ENCODE measurements at regions of chr12 and their contacts with region 1.

Region 1: DNA sequence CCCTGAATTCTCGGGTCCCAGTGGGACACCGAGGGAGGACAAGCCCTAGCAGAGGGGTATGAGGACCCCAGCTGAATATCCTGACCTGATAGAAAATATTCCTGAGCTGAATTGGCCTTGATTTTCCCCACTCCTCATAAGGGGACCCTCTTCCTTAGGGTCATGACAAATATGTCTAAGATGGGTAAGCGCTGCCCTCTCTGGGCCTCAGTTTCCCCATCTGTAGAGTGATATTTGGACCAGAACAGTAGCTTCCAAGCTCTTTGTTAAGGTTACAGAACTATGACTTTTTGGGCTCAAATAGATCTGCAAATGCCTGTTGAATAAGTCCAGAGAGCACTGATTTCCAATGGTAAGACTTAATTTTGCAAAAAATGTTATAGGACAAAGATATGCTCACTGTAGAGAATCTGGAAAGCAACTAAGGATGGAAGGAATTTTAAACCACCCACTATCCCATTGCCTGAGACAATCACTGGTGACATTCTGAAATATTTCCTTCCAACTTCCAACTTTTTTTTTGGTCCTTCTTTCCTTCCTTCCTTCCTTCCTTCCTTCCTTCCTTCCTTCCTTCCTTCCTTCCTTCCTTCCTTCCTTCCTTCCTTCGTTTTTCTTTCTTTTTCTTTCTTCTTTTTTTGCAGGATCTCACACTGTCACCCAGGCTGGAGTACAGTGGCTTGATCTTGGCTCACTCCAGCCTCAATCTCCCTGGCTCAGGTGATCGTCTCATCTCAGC is 32.0 kb downstream of the MYL2 start:
- DNase-seq: no peak
- ATAC-seq: no peak
- H3K4me3 ChIP-seq: no peak overlapping the region
- H3K27ac ChIP-seq: no peak overlapping the region
- H3K4me1 ChIP-seq: no peaks in the 10 kb centered on the region
- H3K27me3 ChIP-seq: no peaks in the 10 kb centered on the region

Region 2: DNA sequence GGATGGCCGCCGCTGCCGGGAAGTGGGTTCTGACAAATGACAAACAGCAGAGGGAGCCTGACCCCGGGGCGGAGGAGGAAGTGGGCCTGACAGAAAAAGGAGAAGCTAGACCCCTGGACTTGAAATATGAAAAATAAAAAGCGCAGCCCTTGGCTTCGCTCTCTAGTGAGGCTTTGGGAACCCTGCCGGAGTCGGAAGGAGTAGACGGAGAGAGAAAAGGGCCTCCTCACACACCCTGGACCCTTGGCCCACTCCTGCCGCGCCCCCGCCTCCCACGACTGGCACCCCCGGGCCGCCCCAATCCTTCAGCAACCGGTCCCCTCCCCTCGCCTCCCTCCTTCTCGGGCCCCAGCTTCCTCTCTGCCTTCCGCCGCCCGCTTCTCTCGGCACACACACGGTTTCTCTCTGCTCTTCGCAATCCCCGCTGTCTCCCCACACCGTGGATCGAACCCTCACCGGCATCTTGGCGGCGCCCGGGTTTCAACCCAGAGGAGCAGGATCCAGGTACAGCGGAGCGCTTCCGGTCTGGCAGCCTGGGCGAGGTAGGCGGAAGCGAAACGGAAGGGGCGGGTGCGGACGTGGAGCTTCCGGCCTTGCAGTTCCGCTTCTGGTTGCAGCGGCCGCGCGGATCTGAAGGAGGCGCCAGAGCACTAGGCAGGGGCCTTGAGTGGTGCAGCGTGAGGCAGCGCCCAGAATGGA is 438.5 kb before region 1 on chr12 and contains the start of gene ARPC3:
- intact Hi-C with region 1: loop called (anchors 5 to 10 kb)
- DNase-seq: peak; percentile 97 to 98
- ATAC-seq: peak; percentile 100
- H3K4me3 ChIP-seq: peak within 1 kb of the TSS; percentile 45 to 95
- H3K27ac ChIP-seq: peak within 1 kb of the TSS; percentile 33 to 76
- H3K4me1 ChIP-seq: no peaks in the 10 kb centered on the region
- H3K27me3 ChIP-seq: no peaks in the 10 kb centered on the region
- total RNA-seq, gene ARPC3: 154 to 155 TPM

Region 3: GRCh38 chr12:110513842-110514241 is 374.6 kb before region 1 on chr12:
- intact Hi-C with region 1: loop called in 1 of 2 experiments (anchors 2 kb)
- DNase-seq: no peak
- ATAC-seq: no peak
- H3K4me3 ChIP-seq: no peak overlapping the region
- H3K27ac ChIP-seq: no peak overlapping the region
- H3K4me1 ChIP-seq: no peaks in the 10 kb centered on the region
- H3K27me3 ChIP-seq: no peaks in the 10 kb centered on the region

Region 4: GRCh38 chr12:110583137-110584059 is 305.0 kb before region 1 on chr12 and contains the start of gene PPTC7:
- intact Hi-C with region 1: no loop called
- DNase-seq: peak; percentile 98 to 99
- ATAC-seq: peak; percentile 99
- H3K4me3 ChIP-seq: peak within 1 kb of the TSS; percentile 69 to 93
- H3K27ac ChIP-seq: peak within 1 kb of the TSS; percentile 50
- H3K4me1 ChIP-seq: no peaks in the 10 kb centered on the region
- H3K27me3 ChIP-seq: no peaks in the 10 kb centered on the region
- total RNA-seq, gene PPTC7: 17.1 to 21.8 TPM

Region 5: GRCh38 chr12:110606253-110606611 is 282.2 kb before region 1 on chr12:
- intact Hi-C with region 1: loop called in 1 of 2 experiments (anchors 5 kb)
- DNase-seq: no peak
- ATAC-seq: no peak
- H3K4me3 ChIP-seq: no peak overlapping the region
- H3K27ac ChIP-seq: no peak overlapping the region
- H3K4me1 ChIP-seq: no peaks in the 10 kb centered on the region
- H3K27me3 ChIP-seq: no peaks in the 10 kb centered on the region

Region 6: GRCh38 chr12:110742718-110743570 is 145.5 kb before region 1 on chr12 and contains the start of gene PPP1CC:
- intact Hi-C with region 1: loop called (anchors 5 to 10 kb)
- DNase-seq: peak; percentile 97
- ATAC-seq: peak; percentile 98
- H3K4me3 ChIP-seq: peak within 1 kb of the TSS; percentile 83 to 89
- H3K27ac ChIP-seq: peak within 1 kb of the TSS in 1 of 2 donors; percentile 72
- H3K4me1 ChIP-seq: peaks cover 0 to 2% of the 10 kb centered on the region in 2 donors
- H3K27me3 ChIP-seq: no peaks in the 10 kb centered on the region
- total RNA-seq, gene PPP1CC: 73.8 to 85.8 TPM

Region 7: DNA sequence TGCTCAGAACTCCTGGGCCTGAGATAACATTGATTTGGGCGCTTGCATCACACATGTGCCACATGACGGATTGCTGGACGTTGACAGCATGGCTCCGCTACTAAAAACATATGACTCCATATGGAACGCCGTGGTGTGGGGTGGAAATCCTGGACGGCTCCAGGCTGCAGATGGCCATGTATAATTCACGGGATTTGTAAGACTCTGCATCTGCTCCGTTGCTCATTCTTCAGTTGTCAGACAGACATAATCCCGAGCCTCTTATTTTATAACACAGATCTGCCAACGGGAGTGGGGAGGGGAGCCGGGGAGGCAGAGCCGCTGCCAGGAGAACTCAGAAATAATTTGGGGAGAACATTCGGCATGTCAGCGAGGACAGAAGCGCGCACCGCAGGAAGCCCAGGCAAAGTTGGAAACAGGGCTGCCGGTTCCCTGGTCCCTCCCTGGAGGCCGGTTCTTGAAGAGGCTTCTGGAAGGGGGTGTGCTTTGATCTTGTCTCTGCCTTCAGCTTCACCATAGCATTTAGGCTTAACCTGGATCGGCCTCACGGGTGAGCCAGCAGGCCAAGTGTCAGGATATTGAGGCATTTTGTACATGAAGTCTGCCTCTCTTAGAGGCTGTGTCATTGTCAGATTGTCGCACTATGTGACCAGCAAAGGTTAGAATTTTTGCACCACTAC is 77.8 kb after region 1 on chr12:
- intact Hi-C with region 1: no loop called
- DNase-seq: no peak
- ATAC-seq: no peak
- H3K4me3 ChIP-seq: no peak overlapping the region
- H3K27ac ChIP-seq: no peak overlapping the region
- H3K4me1 ChIP-seq: no peaks in the 10 kb centered on the region
- H3K27me3 ChIP-seq: no peaks in the 10 kb centered on the region